WTC11 (cell line): ENCODE measurements at regions of chr1 and their contacts with region 1.

Region 1: GRCh38 chr1:203871107-203871875 is 9.9 kb downstream of the SNRPE start:
- DNase-seq: peak; percentile 24
- ATAC-seq: peak; percentile 84
- H3K4me3 Mint-ChIP-seq: no peak overlapping the region
- H3K27ac Mint-ChIP-seq: peak overlapping the region; percentile 70; the same call in 1 of the 2 replicates
- H3K4me1 Mint-ChIP-seq: peaks cover 7% of the 10 kb centered on the region
- H3K27me3 Mint-ChIP-seq: no peaks in the 10 kb centered on the region
- CTCF ChIP-seq: peak; percentile 50; the same call in 1 of the 2 replicates

Region 2: GRCh38 chr1:203776636-203777035 is 94.7 kb before region 1 on chr1:
- CTCF ChIA-PET with region 1: no interaction called
- POLR2A ChIA-PET with region 1: no interaction called
- DNase-seq: no peak
- ATAC-seq: no peak
- H3K4me3 Mint-ChIP-seq: no peak overlapping the region
- H3K27ac Mint-ChIP-seq: no peak overlapping the region
- H3K4me1 Mint-ChIP-seq: peaks cover 9% of the 10 kb centered on the region; the same call in 1 of the 2 replicates
- H3K27me3 Mint-ChIP-seq: no peaks in the 10 kb centered on the region; the same call in 1 of the 2 replicates
- CTCF ChIP-seq: no peak

Region 3: DNA sequence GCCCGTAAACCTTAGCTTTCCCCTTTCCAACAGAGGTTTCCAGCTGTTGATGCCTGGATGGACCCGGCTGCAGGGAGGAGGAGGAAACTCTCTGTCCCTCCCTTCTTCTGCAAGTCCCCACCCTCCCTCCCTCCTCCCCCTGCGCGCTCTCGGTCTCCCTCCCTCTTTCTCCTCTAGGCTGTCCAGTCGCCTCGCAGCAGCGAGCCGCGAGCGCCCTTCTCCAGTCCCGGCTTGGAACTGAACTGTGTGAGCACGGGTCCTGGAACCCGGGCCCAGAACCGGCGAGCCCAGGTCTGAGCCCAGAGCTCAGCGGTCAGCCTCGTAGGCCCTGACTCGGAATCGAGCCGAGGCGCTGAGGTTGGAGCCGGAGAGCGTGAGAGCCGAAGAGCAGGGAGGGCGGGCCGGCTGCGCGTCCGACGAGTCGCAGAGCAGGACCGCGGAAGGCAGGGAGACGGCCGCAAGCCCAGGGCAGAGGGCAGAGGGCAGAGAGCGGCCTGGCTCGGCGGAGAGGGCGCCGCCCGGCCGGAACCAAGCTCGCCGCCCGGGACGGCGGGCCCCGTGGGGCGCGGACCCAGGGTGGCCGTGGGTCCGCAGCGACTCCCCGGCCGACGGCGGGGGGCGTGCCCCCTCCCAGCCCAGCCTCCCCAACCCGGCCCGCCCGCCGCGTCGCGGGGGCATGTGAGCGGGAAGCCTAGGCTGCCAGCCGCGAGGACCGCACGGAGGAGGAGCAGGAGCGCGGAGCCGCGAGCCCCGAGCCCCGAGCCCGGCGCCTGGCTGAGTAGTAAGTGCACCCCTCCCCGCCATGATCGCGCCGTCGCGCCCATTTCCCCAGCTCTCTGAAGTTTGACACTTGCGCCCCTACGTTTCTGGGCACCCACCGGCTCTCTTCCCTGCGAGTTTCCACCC is 201.9 kb after region 1 on chr1 and contains the start of gene SOX13:
- CTCF ChIA-PET with region 1: interaction called, 20 read pairs
- POLR2A ChIA-PET with region 1: interaction called, 3 read pairs
- DNase-seq: peak; percentile 84
- ATAC-seq: peak; percentile 78
- H3K4me3 Mint-ChIP-seq: peak within 1 kb of the TSS; percentile 99
- H3K27ac Mint-ChIP-seq: peak within 1 kb of the TSS; percentile 98
- H3K4me1 Mint-ChIP-seq: peaks cover 56% of the 10 kb centered on the region
- H3K27me3 Mint-ChIP-seq: peaks cover 2% of the 10 kb centered on the region
- CTCF ChIP-seq: no peak
- total RNA-seq, gene SOX13: 139 to 171 TPM (median 148 TPM) in 3 replicates

Region 4: DNA sequence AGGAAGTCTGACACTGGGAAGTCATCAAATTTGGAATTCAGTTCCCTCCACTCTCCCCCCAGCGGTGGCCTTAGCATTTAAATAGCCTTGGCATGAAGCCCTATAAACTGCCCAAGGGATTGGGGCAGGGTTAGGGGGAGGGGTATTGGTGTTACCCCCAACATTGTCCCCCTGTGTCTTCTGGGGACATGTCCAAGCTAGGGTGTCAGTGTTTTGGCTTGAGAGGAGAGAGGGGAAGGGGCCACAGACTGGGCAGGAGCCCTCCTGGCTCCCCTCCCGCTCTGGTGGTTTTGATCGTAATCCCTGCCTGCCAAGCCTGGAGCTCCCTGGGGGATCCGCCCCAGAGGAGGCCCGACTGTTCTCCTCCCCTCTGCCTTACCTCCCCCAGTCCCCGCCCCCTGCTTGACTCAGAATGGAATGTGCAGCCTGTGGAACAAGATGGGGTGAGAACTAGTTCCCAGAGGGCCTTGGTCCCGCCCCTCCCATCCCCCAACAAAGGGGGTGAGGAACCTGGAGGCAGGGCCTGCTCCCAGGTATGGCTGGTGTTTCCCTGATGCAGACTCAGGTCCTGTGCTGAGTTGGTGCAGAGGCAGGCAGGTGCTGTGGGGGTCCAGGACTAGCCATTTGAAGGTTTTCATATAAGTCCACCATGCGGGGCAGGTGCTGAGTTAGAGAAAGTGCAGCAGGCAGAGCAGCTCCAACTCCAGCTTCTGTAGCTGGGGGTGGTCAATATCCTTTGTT is 209.0 kb after region 1 on chr1:
- CTCF ChIA-PET with region 1: interaction called, 13 read pairs
- POLR2A ChIA-PET with region 1: interaction called, 4 read pairs
- DNase-seq: peak; percentile 98
- ATAC-seq: peak; percentile 74
- H3K4me3 Mint-ChIP-seq: peak overlapping the region; percentile 61
- H3K27ac Mint-ChIP-seq: peak overlapping the region; percentile 100
- H3K4me1 Mint-ChIP-seq: peaks cover 93% of the 10 kb centered on the region
- H3K27me3 Mint-ChIP-seq: peaks cover under 1% of the 10 kb centered on the region; the same call in 1 of the 2 replicates
- CTCF ChIP-seq: no peak

Region 5: GRCh38 chr1:204089044-204089751 is 217.9 kb after region 1 on chr1:
- CTCF ChIA-PET with region 1: interaction called, 14 read pairs
- POLR2A ChIA-PET with region 1: interaction called, 4 read pairs
- DNase-seq: no peak
- ATAC-seq: no peak
- H3K4me3 Mint-ChIP-seq: no peak overlapping the region
- H3K27ac Mint-ChIP-seq: peak overlapping the region; percentile 90
- H3K4me1 Mint-ChIP-seq: peaks cover 97% of the 10 kb centered on the region
- H3K27me3 Mint-ChIP-seq: no peaks in the 10 kb centered on the region
- CTCF ChIP-seq: no peak